ENCODE measurements at regions of chr20 and their contacts with region 1.

Region 1: GRCh38 chr20:1185790-1186334 is 1.1 kb upstream of the TMEM74B start:
- DNase-seq: no peak
- H3K4me3 ChIP-seq: no peak overlapping the region
- CTCF ChIP-seq: no peak
- POLR2A ChIP-seq: no peak

Region 2: DNA sequence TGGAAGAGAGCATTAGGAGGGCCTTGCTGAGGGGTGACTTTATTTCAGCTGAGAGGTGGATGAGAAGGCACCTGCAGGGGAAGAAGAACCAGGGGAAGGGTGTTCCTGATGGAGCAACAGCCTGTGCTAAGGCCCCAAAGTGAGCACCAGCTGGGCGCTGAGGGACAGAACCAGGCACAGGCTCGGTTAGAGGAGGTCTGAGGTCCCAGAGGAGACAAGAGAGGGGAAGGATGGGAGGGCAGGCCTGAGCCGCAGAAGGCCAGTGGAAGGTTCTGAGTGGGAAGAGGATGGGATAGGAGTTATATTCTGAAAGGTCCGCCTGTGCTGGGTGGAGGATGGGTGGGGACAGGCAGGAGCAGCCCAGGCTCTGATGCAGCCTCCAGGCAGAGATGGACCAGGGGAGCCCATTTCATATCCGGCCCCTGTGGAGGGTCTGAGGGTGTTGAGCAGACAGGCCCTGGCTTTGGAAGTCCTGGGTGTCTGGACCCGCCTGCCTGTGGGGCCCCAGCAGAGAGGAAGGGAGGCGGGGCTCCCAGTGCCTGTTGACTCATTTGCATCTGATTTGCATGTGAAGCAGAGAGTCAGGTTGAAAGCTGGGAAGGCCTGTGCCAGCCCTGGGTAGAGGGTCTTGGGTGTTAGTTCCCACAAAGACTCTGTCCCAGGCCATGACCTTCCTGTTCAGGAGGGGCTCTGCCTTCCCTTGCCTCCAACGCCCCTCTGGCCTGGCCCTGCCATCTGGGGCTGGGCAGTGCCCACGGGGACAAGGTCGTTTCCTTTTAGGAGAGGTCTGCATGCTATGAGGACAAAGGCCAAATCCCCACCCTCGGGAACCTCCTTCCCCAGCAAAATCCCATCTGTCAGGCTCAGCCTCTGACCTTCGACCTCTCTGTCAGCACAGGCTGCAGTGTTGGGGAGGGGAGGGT is 362.9 kb before region 1 on chr20:
- intact Hi-C with region 1: loop called (anchors 5 kb)
- DNase-seq: peak in 1 of 2 donors; percentile 64
- H3K4me3 ChIP-seq: no peak overlapping the region
- CTCF ChIP-seq: no peak
- POLR2A ChIP-seq: no peak

Region 3: GRCh38 chr20:1083431-1084080 is 102.3 kb before region 1 on chr20:
- intact Hi-C with region 1: no loop called
- DNase-seq: no peak
- H3K4me3 ChIP-seq: no peak overlapping the region
- CTCF ChIP-seq: no peak
- POLR2A ChIP-seq: no peak